ENCODE measurements at regions of chr1 and their contacts with region 1.

Region 1: DNA sequence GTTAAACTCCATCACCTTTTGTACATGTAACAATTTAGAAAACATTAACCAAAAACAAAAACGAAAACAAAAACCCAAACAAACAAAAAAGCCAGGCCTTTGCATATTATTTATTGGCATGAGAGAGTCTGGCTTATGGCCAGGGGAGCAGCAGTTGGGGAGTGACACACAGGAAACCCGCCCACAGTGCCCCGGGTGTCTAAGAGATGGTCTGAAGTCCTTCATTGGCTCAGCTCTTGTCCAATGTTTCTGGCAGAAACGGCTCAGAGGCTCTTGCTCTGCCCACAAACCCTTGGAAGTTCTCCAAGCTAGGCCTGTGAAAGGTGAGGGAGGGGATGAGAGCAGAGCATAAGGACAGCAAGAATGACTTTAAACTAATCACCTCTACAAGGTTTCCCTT is 131.5 kb downstream of the CNIH3 start:
- DNase-seq: no peak
- ATAC-seq: no peak
- H3K4me3 ChIP-seq: no peak overlapping the region
- H3K27ac ChIP-seq: no peak overlapping the region
- H3K4me1 ChIP-seq: no peaks in the 10 kb centered on the region
- H3K27me3 ChIP-seq: peaks cover 4% of the 10 kb centered on the region; the same call in 1 of the 2 replicates
- CTCF ChIP-seq: no peak

Region 2: GRCh38 chr1:224894918-224895317 is 147.3 kb after region 1 on chr1:
- CTCF ChIA-PET with region 1: interaction called, 11 read pairs
- POLR2A ChIA-PET with region 1: no interaction called
- in situ Hi-C with region 1: no loop called
- intact Hi-C with region 1: no loop called
- DNase-seq: no peak
- ATAC-seq: no peak
- H3K4me3 ChIP-seq: no peak overlapping the region
- H3K27ac ChIP-seq: no peak overlapping the region
- H3K4me1 ChIP-seq: no peaks in the 10 kb centered on the region
- H3K27me3 ChIP-seq: peaks cover 5% of the 10 kb centered on the region; the same call in 1 of the 2 replicates
- CTCF ChIP-seq: peak; percentile 50

Measured in Panc1 (cell line).